ENCODE measurements at regions of chr1 and their contacts with region 1.

Region 1: GRCh38 chr1:180521474-180522207 is 19.3 kb upstream of the ACBD6 start:
- DNase-seq: no peak
- H3K4me3 ChIP-seq: no peak overlapping the region
- H3K27ac ChIP-seq: no peak overlapping the region
- H3K4me1 ChIP-seq: peaks cover 0 to 8% (median 2%) of the 10 kb centered on the region in 4 experiments; a peak in 3 of 7 replicates
- H3K27me3 ChIP-seq: no peaks in the 10 kb centered on the region
- CTCF ChIP-seq: no peak
- EP300 ChIP-seq: no peak
- POLR2A ChIP-seq: no peak
- RAD21 ChIP-seq: no peak

Region 2: DNA sequence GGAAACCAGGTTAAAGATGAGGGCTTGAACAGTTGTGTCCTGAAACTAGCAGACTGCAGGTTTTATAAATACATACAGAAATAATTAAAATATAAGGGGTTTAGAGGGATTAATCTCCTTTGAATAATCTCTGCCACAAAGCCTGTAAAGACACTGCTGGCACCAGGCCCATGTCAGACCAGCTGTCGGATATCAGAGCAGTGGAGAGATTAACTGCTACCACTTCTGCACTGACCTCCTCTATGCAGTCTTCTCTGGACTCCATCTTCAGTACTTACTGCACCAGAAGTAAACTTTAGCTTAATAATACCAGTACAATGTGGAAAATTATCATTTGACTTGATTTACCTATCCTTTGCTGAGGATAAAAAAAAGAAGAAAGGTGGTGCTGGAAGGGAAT is 163.0 kb before region 1 on chr1:
- CTCF ChIA-PET with region 1: no interaction called
- POLR2A ChIA-PET with region 1: no interaction called
- DNase-seq: no peak
- H3K4me3 ChIP-seq: no peak overlapping the region
- H3K27ac ChIP-seq: no peak overlapping the region
- H3K4me1 ChIP-seq: peaks cover 2 to 14% (median 5%) of the 10 kb centered on the region in 4 experiments; a peak in 6 of 7 replicates
- H3K27me3 ChIP-seq: no peaks in the 10 kb centered on the region
- CTCF ChIP-seq: no peak
- EP300 ChIP-seq: no peak
- POLR2A ChIP-seq: no peak
- RAD21 ChIP-seq: no peak

Region 3: DNA sequence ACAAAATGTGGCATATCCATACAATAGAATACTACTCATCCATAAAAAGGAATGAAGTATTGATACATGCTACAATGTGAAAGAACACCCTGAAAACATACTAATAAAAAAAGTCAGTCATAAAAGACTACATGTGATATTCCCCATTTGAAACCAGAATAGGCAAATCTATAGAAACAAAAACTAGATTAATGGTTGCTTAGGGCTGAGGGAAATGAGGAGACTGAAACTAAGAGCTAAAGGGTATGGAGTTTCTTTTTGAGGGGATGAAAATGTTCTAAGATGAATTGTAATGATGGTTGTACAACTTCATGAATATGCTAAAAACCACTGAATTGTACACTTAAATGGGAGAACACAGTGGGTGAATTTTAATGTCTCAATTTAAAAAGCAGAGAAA is 70.1 kb before region 1 on chr1:
- CTCF ChIA-PET with region 1: no interaction called
- POLR2A ChIA-PET with region 1: no interaction called
- DNase-seq: no peak
- H3K4me3 ChIP-seq: no peak overlapping the region
- H3K27ac ChIP-seq: no peak overlapping the region
- H3K4me1 ChIP-seq: no peaks in the 10 kb centered on the region
- H3K27me3 ChIP-seq: no peaks in the 10 kb centered on the region
- CTCF ChIP-seq: no peak
- EP300 ChIP-seq: no peak
- POLR2A ChIP-seq: no peak
- RAD21 ChIP-seq: no peak

Region 4: DNA sequence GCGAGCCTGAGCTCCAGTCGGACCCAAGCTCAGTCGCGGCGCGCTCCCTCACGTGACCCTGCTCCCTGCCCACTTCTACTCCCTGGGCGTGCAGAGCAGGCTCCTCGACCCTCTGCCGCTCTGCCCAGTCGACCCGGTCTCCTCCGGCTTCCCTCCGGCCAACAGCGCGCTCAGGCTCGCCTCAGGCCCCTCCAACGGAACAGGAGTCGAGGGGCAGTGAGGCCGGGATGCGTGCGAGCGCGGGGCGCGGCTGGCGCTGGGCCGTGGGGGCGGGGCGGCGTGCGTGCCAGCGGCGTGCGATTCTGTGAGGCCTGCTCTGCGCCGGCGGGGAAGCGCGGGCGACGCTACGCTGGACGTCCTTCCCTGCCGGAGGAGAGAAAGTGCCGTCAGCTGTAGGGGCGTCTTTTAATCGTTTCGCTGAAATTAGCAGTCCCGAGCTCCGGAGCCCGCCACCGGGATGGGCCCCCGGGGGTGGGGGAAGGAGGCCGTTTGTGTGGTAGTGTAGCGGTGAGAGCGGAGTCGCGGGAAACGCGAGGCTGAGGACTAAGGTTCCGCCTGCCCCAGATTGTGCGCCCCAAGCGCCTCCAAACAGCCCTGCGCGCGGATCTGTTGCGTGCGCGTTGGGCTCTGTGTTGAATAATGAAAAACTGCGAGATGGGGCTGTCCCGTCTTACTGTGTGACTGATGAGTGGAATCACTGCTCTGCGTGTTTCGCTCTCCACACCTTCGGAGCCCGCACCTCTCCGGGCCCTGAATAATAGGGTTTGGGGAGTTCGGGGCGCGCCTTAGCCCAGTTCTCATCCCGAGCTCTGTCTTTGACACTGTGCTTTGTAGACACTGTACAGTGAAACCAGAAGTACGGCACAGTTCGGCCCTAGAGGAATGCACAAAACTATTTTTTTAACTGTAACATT is 19.0 kb before region 1 on chr1 and contains the start of gene ACBD6:
- CTCF ChIA-PET with region 1: interaction called, 21 read pairs
- POLR2A ChIA-PET with region 1: interaction called, 21 read pairs
- DNase-seq: peak; percentile 54 to 95
- H3K4me3 ChIP-seq: peak within 1 kb of the TSS; percentile 74 to 95 (median 78)
- H3K27ac ChIP-seq: peak within 1 kb of the TSS; percentile 92
- H3K4me1 ChIP-seq: peaks cover 0 to 4% (median 1%) of the 10 kb centered on the region in 4 experiments; a peak in 2 of 7 replicates
- H3K27me3 ChIP-seq: peaks cover 0 to 4% (median 0%) of the 10 kb centered on the region in 4 experiments; a peak in 2 of 7 replicates
- CTCF ChIP-seq: peak in 2 of 3 experiments; percentile 7 to 24; a peak in 1 of 4 replicates
- EP300 ChIP-seq: 0 out of 3 replicates have a peak, but pooled peaks of 1 of the 2 experiments have one; percentile 27
- POLR2A ChIP-seq: peak in 1 of 2 experiments; percentile 87; a peak in 2 of 3 replicates
- RAD21 ChIP-seq: no peak
- total RNA-seq, gene ACBD6: 52.0 and 58.0 TPM in 2 replicates

Measured in H1 (cell line).